ENCODE measurements at regions of chr5 and their contacts with region 1.

Region 1: GRCh38 chr5:264346-264745 is 7.1 kb upstream of the PDCD6 start:
- DNase-seq: no peak
- H3K4me3 ChIP-seq: peak overlapping the region; percentile 22; the same call in 1 of the 2 replicates
- H3K27ac ChIP-seq: peak overlapping the region; percentile 87
- H3K4me1 ChIP-seq: peaks cover 23% of the 10 kb centered on the region
- H3K27me3 ChIP-seq: no peaks in the 10 kb centered on the region
- CTCF ChIP-seq: no peak

Region 2: DNA sequence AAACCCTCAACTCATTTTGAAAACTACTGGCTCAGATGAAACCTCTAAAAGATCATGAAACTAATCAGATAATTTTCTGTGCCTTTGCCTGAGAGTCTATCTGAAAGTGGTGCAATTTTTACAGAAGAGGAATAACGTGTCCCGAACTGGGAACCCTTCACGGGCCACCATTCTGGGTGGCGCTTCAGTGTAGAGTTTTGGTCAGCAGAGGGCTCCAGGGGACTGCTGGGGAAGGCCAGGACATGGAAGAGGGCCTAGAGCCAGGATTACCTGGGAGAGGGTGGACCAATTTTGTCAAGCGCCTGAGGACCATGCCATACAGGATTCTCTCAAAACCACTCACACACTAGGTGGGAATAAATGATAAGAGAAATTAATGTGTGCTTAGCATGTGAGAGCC is 222.1 kb before region 1 on chr5:
- CTCF ChIA-PET with region 1: no interaction called
- POLR2A ChIA-PET with region 1: no interaction called
- intact Hi-C with region 1: loop called (anchors 1 kb)
- DNase-seq: peak in 1 of 2 experiments; percentile 63
- H3K4me3 ChIP-seq: no peak overlapping the region
- H3K27ac ChIP-seq: no peak overlapping the region
- H3K4me1 ChIP-seq: peaks cover 4% of the 10 kb centered on the region; the same call in 1 of the 2 replicates
- H3K27me3 ChIP-seq: peaks cover 79% of the 10 kb centered on the region
- CTCF ChIP-seq: peak; percentile 66

Region 3: GRCh38 chr5:167982-168660 is 96.2 kb before region 1 on chr5:
- CTCF ChIA-PET with region 1: no interaction called
- POLR2A ChIA-PET with region 1: no interaction called
- intact Hi-C with region 1: no loop called
- DNase-seq: peak in 1 of 2 experiments; percentile 64
- H3K4me3 ChIP-seq: no peak overlapping the region
- H3K27ac ChIP-seq: no peak overlapping the region
- H3K4me1 ChIP-seq: no peaks in the 10 kb centered on the region
- H3K27me3 ChIP-seq: peaks cover 58% of the 10 kb centered on the region
- CTCF ChIP-seq: no peak

Region 4: DNA sequence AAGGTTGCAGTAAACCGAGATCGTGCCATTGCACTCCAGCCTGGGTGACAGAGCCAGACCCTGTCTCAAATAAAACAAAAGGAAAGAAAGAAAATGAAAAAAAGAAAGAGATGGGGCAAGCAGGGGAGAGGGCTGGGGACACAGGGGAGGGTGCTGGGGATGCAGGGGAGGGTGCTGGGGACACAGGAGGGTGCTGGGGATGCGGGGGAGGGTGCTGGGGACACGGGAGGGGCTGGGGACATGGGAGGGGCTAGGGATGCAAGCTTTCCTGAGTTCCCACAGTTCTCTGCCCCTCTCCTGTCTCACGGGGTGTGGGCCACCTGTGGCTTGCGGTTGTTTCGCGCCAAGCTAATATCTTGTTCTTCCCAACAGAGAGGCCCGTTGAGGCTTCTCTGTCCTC is 14.3 kb after region 1 on chr5:
- CTCF ChIA-PET with region 1: interaction called, 4 read pairs
- POLR2A ChIA-PET with region 1: interaction called, 10 read pairs
- intact Hi-C with region 1: no loop called
- DNase-seq: no peak
- H3K4me3 ChIP-seq: no peak overlapping the region
- H3K27ac ChIP-seq: no peak overlapping the region
- H3K4me1 ChIP-seq: peaks cover 4% of the 10 kb centered on the region; the same call in 1 of the 2 replicates
- H3K27me3 ChIP-seq: no peaks in the 10 kb centered on the region
- CTCF ChIP-seq: no peak

Region 5: GRCh38 chr5:315488-316209 is 51.3 kb after region 1 on chr5:
- CTCF ChIA-PET with region 1: no interaction called
- POLR2A ChIA-PET with region 1: no interaction called
- intact Hi-C with region 1: no loop called
- DNase-seq: no peak
- H3K4me3 ChIP-seq: no peak overlapping the region
- H3K27ac ChIP-seq: no peak overlapping the region
- H3K4me1 ChIP-seq: no peaks in the 10 kb centered on the region
- H3K27me3 ChIP-seq: no peaks in the 10 kb centered on the region
- CTCF ChIP-seq: no peak

Measured in PC-9 (cell line).